IMR-90 (cell line): ENCODE measurements at regions of chr14 and their contacts with region 1.

Region 1: GRCh38 chr14:55265197-55265596 is 6.0 kb upstream of the FBXO34 start:
- DNase-seq: no peak
- ATAC-seq: no peak
- H3K4me3 ChIP-seq: no peak overlapping the region
- H3K27ac ChIP-seq: no peak overlapping the region
- H3K4me1 ChIP-seq: 0 out of 2 replicates have a peak, but pooled peaks cover 2% of the 10 kb centered on the region
- H3K27me3 ChIP-seq: peaks cover 6% of the 10 kb centered on the region; the same call in 1 of the 2 replicates
- CTCF ChIP-seq: no peak
- POLR2A ChIP-seq: no peak
- RAD21 ChIP-seq: no peak

Region 2: DNA sequence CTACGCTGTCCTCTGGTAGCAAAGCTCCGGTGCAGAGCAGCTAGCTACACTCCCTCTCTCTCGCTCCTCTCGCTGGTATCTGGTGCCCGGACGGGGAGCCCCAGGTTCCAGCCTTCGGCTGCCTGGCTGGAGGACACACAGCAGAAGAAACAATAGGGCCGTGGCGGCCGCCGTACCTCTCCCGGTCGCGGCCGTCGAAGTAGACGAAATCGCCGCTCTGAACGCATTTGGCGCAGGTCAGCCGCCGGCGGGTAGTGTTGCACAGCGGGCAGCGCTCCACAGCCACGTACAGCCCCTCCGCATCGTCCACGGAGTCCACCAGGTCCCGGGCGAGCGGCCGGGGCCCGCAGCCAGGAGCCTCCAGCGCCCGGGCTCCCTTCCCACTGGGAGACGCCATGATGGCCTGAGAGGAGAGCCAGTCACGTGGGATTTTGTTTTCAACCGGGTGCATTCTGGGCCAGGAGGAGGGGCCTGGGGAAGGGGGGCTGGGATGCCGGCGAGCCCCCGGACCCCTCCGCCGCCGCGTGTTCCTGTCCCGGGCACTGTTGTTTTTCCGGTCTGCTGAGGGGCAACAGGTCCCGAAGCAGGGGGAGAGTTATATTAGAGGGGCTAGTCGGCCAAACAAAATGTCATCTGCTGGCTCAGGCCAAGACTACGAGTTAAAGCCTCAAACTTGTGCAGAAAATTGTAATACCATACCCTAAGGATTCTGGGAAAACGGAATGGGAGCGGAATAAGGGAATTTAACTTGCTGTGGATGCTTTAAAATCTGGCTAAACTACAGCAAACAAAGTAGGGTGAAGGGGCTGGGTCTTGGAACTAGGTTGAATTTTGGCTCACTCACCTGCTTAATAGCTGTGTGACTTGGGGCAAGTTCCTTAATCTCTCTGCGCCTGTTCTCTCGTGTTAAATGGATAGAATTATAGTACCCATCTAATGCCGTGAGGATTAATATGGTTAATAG is 146.5 kb after region 1 on chr14 and contains the start of gene ATG14:
- CTCF ChIA-PET with region 1: no interaction called
- POLR2A ChIA-PET with region 1: no interaction called
- dilution Hi-C with region 1: no loop called
- in situ Hi-C with region 1: no loop called
- intact Hi-C with region 1: loop called (anchors 2 kb)
- DNase-seq: peak; percentile 76
- ATAC-seq: peak; percentile 100
- H3K4me3 ChIP-seq: peak within 1 kb of the TSS; percentile 77
- H3K27ac ChIP-seq: peak within 1 kb of the TSS; percentile 83
- H3K4me1 ChIP-seq: peaks cover 2% of the 10 kb centered on the region; the same call in 1 of the 2 replicates
- H3K27me3 ChIP-seq: no peaks in the 10 kb centered on the region; the same call in 1 of the 2 replicates
- CTCF ChIP-seq: no peak
- POLR2A ChIP-seq: peak; percentile 88
- RAD21 ChIP-seq: no peak
- total RNA-seq, gene ATG14: 12.4 and 13.3 TPM in 2 replicates